HEK293T (cell line): ENCODE measurements at regions of chr4 and their contacts with region 1.

Region 1: GRCh38 chr4:181331214-181331613 is 912.0 kb upstream of the TENM3 start:
- DNase-seq: no peak

Region 2: DNA sequence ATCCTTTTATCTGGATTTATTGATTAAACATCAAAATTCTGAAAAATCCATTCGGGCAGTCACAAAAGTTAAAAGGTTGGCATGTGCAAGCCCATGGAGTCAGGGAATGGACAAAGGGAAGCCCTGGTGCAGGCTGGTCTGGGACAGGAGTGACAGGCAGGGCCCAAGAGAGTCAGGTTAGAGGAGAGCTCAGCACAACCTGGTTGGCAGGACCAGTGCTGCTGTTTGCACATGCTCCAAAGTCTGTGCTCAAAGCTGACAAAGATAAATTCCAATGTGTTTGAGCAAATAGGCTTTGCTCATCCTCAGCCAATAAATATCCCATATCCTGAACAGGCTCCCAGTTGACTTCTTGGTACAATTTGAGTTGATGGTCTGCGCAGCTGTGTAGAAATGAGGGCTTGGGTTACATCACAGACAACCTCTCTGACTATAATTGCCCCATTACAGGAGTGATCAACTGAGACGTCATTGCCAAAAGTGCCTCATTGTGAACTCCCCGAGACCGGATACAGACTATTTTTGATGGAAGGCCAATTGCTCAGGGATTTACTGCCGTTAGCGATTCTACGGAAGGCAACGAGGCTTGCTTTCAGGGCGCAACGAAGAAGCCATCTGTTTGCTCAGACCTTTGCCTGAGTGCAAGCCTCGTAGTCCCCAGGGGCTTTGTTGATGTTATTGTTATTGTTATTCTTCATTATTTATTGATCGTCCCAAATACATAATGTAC is 96.1 kb before region 1 on chr4:
- CTCF ChIA-PET with region 1: no interaction called
- POLR2A ChIA-PET with region 1: no interaction called
- DNase-seq: no peak

Region 3: GRCh38 chr4:181272422-181272821 is 58.8 kb before region 1 on chr4:
- CTCF ChIA-PET with region 1: no interaction called
- POLR2A ChIA-PET with region 1: no interaction called
- DNase-seq: no peak

Region 4: GRCh38 chr4:181350615-181351415 is 19.6 kb after region 1 on chr4:
- CTCF ChIA-PET with region 1: interaction called, 13 read pairs
- POLR2A ChIA-PET with region 1: no interaction called
- DNase-seq: peak; percentile 12